ENCODE measurements at regions of chr7 and their contacts with region 1.

Region 1: GRCh38 chr7:12623897-12624498 is 53.5 kb downstream of the SCIN start:
- DNase-seq: peak; percentile 19 to 49 (median 24)
- ATAC-seq: peak; percentile 78
- H3K4me3 ChIP-seq: no peak overlapping the region
- H3K27ac ChIP-seq: no peak overlapping the region; the same call in 2 of the 3 replicates
- H3K4me1 ChIP-seq: peaks cover 0 to 10% of the 10 kb centered on the region in 2 experiments; a peak in 2 of 5 replicates
- H3K27me3 ChIP-seq: no peaks in the 10 kb centered on the region
- CTCF ChIP-seq: peak; percentile 57 to 88 (median 74); a peak in 5 of 6 replicates
- EP300 ChIP-seq: no peak
- POLR2A ChIP-seq: no peak
- RAD21 ChIP-seq: peak; percentile 88 to 92

Region 2: DNA sequence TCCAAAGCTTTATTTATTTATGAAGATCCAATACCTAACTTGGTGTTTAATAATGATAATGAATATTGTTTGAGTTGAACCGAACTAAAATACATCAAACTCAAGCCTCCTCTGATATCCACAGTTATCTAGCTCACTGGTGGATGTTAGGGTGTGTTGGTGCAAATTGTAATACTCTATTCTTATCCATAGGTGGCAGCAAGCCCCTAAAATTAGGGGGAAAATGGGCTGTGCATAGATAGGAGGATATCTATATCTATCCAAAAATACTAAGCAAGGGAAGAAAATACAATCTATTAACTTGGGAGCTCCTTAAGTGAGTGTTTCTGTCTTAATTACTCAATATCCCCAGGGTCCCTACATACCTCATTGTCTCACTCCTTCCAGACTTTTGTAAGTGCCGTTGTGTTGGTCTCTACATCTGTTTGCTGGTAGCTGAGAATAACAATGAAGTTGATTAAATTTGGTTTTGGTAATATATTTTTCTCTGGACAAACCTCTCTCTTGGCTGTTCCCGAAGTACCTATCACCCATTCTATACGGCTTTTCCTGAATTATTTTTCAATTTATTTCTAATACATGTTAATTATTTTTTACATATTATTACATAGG is 165.4 kb before region 1 on chr7:
- CTCF ChIA-PET with region 1: interaction called, 8 read pairs
- POLR2A ChIA-PET with region 1: no interaction called
- in situ Hi-C with region 1: no loop called
- intact Hi-C with region 1: loop called (anchors 5 kb)
- DNase-seq: peak; percentile 40 to 71 (median 56)
- ATAC-seq: peak; percentile 99
- H3K4me3 ChIP-seq: no peak overlapping the region
- H3K27ac ChIP-seq: no peak overlapping the region
- H3K4me1 ChIP-seq: no peaks in the 10 kb centered on the region
- H3K27me3 ChIP-seq: no peaks in the 10 kb centered on the region
- CTCF ChIP-seq: peak; percentile 74 to 89 (median 78)
- EP300 ChIP-seq: no peak
- POLR2A ChIP-seq: no peak
- RAD21 ChIP-seq: peak; percentile 79 to 93

Region 3: GRCh38 chr7:12524794-12525386 is 99.1 kb before region 1 on chr7:
- CTCF ChIA-PET with region 1: interaction called, 32 read pairs
- POLR2A ChIA-PET with region 1: no interaction called
- in situ Hi-C with region 1: loop called (anchors 5 kb)
- intact Hi-C with region 1: loop called (anchors 1 kb)
- DNase-seq: peak; percentile 20 to 63 (median 34)
- ATAC-seq: peak; percentile 77
- H3K4me3 ChIP-seq: no peak overlapping the region
- H3K27ac ChIP-seq: no peak overlapping the region
- H3K4me1 ChIP-seq: no peaks in the 10 kb centered on the region
- H3K27me3 ChIP-seq: no peaks in the 10 kb centered on the region
- CTCF ChIP-seq: peak; percentile 20 to 81 (median 51); a peak in 3 of 6 replicates
- EP300 ChIP-seq: no peak
- POLR2A ChIP-seq: no peak
- RAD21 ChIP-seq: peak; percentile 91 to 92